Calu3 (cell line): ENCODE measurements at regions of chr14 and their contacts with region 1.

Region 1: GRCh38 chr14:87430810-87431209 is 562.2 kb downstream of the GALC start:
- DNase-seq: no peak
- H3K4me3 Mint-ChIP-seq: no peak overlapping the region
- H3K27ac Mint-ChIP-seq: no peak overlapping the region
- H3K4me1 Mint-ChIP-seq: peaks cover 17% of the 10 kb centered on the region
- H3K27me3 Mint-ChIP-seq: no peaks in the 10 kb centered on the region
- CTCF ChIP-seq: no peak

Region 2: DNA sequence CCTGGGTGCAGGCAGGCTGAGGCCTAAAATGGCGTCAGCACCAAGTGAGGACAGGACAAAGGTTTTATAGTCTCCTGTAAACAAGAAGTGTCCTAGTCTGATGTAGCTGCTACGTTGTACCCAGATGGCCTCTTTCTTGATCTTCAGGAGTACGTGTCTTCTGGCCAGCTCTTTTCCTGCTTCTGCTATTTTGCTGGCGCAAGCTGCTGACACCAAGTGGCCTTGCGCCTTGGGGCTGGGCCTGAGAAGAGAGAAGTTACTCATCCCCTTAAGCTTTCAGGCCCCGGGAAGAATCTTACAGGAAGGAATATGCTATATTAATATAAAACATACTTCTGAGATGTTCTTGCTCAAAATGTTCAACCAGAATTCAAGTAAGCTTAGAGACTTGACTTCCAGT is 43.0 kb before region 1 on chr14:
- CTCF ChIA-PET with region 1: no interaction called
- intact Hi-C with region 1: no loop called
- DNase-seq: no peak
- H3K4me3 Mint-ChIP-seq: no peak overlapping the region
- H3K27ac Mint-ChIP-seq: no peak overlapping the region
- H3K4me1 Mint-ChIP-seq: no peaks in the 10 kb centered on the region
- H3K27me3 Mint-ChIP-seq: no peaks in the 10 kb centered on the region
- CTCF ChIP-seq: no peak

Region 3: DNA sequence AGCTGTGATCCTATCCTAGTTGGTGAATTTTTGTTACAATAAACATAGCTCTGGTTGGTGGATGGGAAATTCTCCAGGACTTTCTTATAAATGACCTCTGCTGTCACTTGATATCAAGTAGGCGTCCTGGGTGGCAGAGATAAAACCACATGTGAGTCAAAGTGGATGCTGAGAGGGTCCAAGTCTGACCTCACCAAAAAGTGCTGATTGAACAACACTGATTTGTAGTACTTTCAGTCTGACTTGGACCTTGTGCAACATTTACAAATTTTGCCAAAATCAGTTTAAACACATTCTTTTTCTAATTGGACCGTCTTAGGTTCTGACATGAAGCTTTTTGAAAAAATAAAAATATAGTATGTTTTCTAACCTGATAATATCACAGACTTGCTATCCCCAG is 23.5 kb before region 1 on chr14:
- CTCF ChIA-PET with region 1: no interaction called
- intact Hi-C with region 1: no loop called
- DNase-seq: no peak
- H3K4me3 Mint-ChIP-seq: no peak overlapping the region
- H3K27ac Mint-ChIP-seq: no peak overlapping the region
- H3K4me1 Mint-ChIP-seq: no peaks in the 10 kb centered on the region
- H3K27me3 Mint-ChIP-seq: no peaks in the 10 kb centered on the region
- CTCF ChIP-seq: no peak

Region 4: DNA sequence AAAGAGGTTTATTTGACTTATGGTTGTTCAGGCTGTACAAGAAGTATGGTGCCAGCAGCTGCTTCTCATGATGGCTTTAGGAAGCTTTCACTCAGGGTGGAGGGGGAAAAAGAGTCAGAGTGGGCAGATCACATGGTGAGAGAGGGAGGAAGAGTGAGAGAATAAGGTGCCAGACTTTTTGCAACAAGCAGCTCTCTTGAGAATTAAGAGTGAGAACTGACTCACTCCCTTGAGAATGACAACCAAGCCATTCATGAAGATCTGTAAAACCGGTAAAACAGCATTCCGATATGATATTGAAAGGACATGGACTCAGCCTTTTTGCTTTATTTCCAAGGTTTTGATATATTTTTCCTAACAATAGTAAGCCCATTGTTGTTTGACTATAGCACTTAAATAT is 61.0 kb after region 1 on chr14:
- CTCF ChIA-PET with region 1: no interaction called
- intact Hi-C with region 1: loop called (anchors 5 kb)
- DNase-seq: peak; percentile 54
- H3K4me3 Mint-ChIP-seq: peak overlapping the region; percentile 55
- H3K27ac Mint-ChIP-seq: peak overlapping the region; percentile 93
- H3K4me1 Mint-ChIP-seq: peaks cover 36% of the 10 kb centered on the region
- H3K27me3 Mint-ChIP-seq: no peaks in the 10 kb centered on the region
- CTCF ChIP-seq: no peak